ENCODE measurements at regions of chr4 and their contacts with region 1.

Region 1: GRCh38 chr4:7295911-7296660 is 103.7 kb downstream of the SORCS2 start:
- DNase-seq: peak; percentile 18 to 45
- ATAC-seq: peak; percentile 59 to 83; a peak in 4 of 6 replicates
- H3K4me3 ChIP-seq: no peak overlapping the region
- H3K27ac ChIP-seq: 0 out of 6 replicates have a peak overlapping the region, but pooled peaks of 1 of the 2 experiments have one; percentile 7
- H3K4me1 ChIP-seq: no peaks in the 10 kb centered on the region
- CTCF ChIP-seq: peak; percentile 65
- EP300 ChIP-seq: no peak
- POLR2A ChIP-seq: no peak
- RAD21 ChIP-seq: peak; percentile 88 to 89

Region 2: GRCh38 chr4:7285244-7286094 is 10.6 kb before region 1 on chr4:
- CTCF ChIA-PET with region 1: interaction called, 24 read pairs
- POLR2A ChIA-PET with region 1: no interaction called
- DNase-seq: no peak
- ATAC-seq: no peak
- H3K4me3 ChIP-seq: no peak overlapping the region
- H3K27ac ChIP-seq: no peak overlapping the region
- H3K4me1 ChIP-seq: no peaks in the 10 kb centered on the region
- CTCF ChIP-seq: no peak
- EP300 ChIP-seq: no peak
- POLR2A ChIP-seq: no peak
- RAD21 ChIP-seq: no peak

Region 3: GRCh38 chr4:7307394-7308099 is 11.5 kb after region 1 on chr4:
- CTCF ChIA-PET with region 1: interaction called, 16 read pairs
- POLR2A ChIA-PET with region 1: no interaction called
- DNase-seq: no peak
- ATAC-seq: no peak; a peak in 1 of 6 replicates
- H3K4me3 ChIP-seq: no peak overlapping the region
- H3K27ac ChIP-seq: no peak overlapping the region
- H3K4me1 ChIP-seq: no peaks in the 10 kb centered on the region
- CTCF ChIP-seq: no peak
- EP300 ChIP-seq: no peak
- POLR2A ChIP-seq: no peak
- RAD21 ChIP-seq: no peak

Region 4: DNA sequence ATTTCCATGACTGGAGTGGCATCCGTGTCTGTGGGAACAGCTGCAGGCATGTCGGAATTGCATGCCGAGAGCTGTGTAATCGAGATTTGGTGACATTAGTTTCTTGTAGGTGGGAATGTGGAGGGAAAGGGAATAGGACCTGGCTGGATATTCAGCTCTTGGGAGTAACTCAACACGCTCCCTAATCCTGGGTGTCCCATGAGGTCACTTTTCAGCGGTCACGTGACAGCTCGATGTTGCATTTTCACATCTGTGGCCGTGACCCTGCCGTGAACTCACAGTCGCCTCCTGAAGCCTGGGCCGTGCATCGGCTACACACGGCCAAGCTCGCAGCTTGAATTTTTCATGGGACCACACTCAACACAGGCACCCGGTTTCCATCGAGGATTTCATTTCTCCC is 164.5 kb after region 1 on chr4:
- CTCF ChIA-PET with region 1: no interaction called
- POLR2A ChIA-PET with region 1: no interaction called
- DNase-seq: no peak
- ATAC-seq: no peak
- H3K4me3 ChIP-seq: no peak overlapping the region
- H3K27ac ChIP-seq: no peak overlapping the region
- H3K4me1 ChIP-seq: peaks cover 4% of the 10 kb centered on the region; the same call in 1 of the 3 replicates
- CTCF ChIP-seq: no peak
- EP300 ChIP-seq: no peak
- POLR2A ChIP-seq: no peak
- RAD21 ChIP-seq: no peak